ENCODE measurements at regions of chr20 and their contacts with region 1.

Region 1: GRCh38 chr20:62302341-62303058 is at the start of gene ADRM1:
- DNase-seq: peak; percentile 88 to 98 (median 95)
- ATAC-seq: peak; percentile 84
- H3K4me3 ChIP-seq: peak within 1 kb of the TSS; percentile 89
- H3K4me3 Mint-ChIP-seq: peak within 1 kb of the TSS; percentile 100
- H3K27ac ChIP-seq: peak within 1 kb of the TSS; percentile 89 to 92
- H3K27ac Mint-ChIP-seq: peak within 1 kb of the TSS; percentile 96
- H3K4me1 ChIP-seq: peaks cover 46% of the 10 kb centered on the region
- H3K4me1 Mint-ChIP-seq: peaks cover 26% of the 10 kb centered on the region
- H3K27me3 ChIP-seq: no peaks in the 10 kb centered on the region
- H3K27me3 Mint-ChIP-seq: no peaks in the 10 kb centered on the region
- CTCF ChIP-seq: peak; percentile 74
- total RNA-seq, gene ADRM1: 40.8 to 44.3 TPM

Region 2: DNA sequence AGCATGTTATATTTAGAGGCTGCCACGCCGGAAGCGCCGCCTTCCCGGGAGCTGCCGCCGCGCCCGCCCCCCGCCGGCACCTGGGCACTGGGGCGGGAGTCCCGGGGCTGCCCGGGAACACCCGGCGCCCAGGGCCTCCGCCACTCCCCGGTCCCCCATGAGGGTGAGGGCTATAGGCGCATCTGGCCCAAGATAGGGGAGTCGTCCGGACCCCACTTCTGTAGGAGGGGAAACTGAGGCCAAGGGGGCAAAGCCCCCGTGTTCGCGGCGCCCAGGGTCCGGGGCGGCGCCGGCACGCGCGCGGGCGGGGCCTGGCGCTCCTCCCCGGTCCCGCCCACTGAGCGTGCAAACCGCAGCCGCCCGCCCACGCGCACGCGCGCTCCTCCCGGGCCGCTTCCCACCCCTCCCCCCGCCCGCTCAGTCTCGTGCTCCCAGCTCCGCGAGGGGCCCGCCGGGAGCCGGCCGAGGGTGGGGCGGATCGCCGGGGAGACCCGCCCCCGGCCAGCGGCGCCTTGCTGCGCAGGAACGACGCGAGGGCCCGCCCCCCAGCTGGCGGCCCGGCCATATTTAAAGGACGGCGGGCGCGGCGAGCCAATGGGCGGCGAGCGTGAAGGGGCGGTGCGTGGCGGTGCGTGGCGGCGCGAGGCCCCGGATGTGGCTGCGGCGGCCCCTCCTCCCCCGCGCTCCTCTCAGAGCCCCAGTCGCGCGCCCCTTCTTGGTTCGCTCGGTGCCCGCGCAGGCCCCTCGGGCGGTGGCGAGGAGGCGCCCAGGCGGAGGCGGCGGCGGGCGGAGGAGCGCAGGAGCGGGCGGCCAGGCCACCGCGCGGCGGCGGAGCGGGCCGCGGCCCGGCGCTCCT is 180.5 kb before region 1 on chr20 and contains the start of gene LSM14B:
- CTCF ChIA-PET with region 1: no interaction called
- POLR2A ChIA-PET with region 1: interaction called, 3 read pairs
- intact Hi-C with region 1: loop called (anchors 2 kb)
- DNase-seq: peak; percentile 89 to 99 (median 96)
- ATAC-seq: peak; percentile 75
- H3K4me3 ChIP-seq: peak within 1 kb of the TSS; percentile 57
- H3K4me3 Mint-ChIP-seq: peak within 1 kb of the TSS; percentile 93
- H3K27ac ChIP-seq: peak within 1 kb of the TSS; percentile 62 to 89
- H3K27ac Mint-ChIP-seq: peak within 1 kb of the TSS; percentile 94
- H3K4me1 ChIP-seq: peaks cover 62% of the 10 kb centered on the region
- H3K4me1 Mint-ChIP-seq: peaks cover 61% of the 10 kb centered on the region
- H3K27me3 ChIP-seq: no peaks in the 10 kb centered on the region
- H3K27me3 Mint-ChIP-seq: no peaks in the 10 kb centered on the region
- CTCF ChIP-seq: no peak
- total RNA-seq, gene LSM14B: 34.5 to 35.7 TPM

Region 3: DNA sequence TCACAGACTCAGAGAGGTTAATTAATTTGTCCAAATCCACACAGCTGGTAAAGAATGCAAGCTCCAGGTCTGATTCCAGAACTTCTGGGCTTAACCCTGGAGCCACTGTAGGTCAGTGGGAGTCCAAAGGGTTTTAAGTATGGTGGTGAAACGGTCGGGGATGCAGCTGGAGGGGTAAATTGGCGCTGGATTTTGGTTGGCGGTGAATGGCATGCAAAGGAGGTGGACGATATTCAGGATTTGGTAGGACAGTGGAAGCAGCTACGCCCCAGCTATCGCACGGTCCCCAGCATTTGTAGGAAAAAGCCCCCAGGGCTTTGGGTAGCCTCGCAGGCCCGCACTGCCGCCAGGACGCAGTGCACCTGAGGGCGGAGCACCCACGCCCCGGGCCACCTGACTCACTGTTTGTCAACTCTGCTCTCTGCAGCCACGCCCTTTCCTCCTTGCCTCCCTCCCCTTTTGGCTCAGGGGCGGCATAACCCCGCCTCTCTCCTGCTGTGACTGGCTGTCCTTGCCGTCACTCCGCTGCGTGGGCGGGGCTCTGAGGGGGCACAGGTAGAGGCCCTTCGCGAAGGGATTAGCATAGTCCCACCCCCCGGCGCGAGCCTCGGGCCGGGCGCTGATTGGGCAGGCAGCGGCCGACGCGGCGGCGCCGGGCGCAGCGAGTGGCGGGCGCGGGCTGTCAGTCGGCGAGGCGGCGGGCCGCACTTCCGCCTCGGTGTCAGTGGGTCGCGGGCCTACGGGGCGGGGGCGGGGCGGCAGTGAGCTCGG is 64.5 kb before region 1 on chr20 and contains the start of gene OSBPL2:
- CTCF ChIA-PET with region 1: interaction called, 3 read pairs
- POLR2A ChIA-PET with region 1: interaction called, 8 read pairs
- intact Hi-C with region 1: loop called (anchors 2 kb)
- DNase-seq: peak; percentile 100
- ATAC-seq: peak; percentile 98
- H3K4me3 ChIP-seq: peak within 1 kb of the TSS; percentile 64
- H3K4me3 Mint-ChIP-seq: peak within 1 kb of the TSS; percentile 92
- H3K27ac ChIP-seq: peak within 1 kb of the TSS; percentile 32 to 57
- H3K27ac Mint-ChIP-seq: peak within 1 kb of the TSS; percentile 95
- H3K4me1 ChIP-seq: peaks cover 36% of the 10 kb centered on the region
- H3K4me1 Mint-ChIP-seq: peaks cover 43% of the 10 kb centered on the region
- H3K27me3 ChIP-seq: no peaks in the 10 kb centered on the region
- H3K27me3 Mint-ChIP-seq: peaks cover 9% of the 10 kb centered on the region
- CTCF ChIP-seq: no peak
- total RNA-seq, gene OSBPL2: 52.8 to 54.4 TPM

Region 4: DNA sequence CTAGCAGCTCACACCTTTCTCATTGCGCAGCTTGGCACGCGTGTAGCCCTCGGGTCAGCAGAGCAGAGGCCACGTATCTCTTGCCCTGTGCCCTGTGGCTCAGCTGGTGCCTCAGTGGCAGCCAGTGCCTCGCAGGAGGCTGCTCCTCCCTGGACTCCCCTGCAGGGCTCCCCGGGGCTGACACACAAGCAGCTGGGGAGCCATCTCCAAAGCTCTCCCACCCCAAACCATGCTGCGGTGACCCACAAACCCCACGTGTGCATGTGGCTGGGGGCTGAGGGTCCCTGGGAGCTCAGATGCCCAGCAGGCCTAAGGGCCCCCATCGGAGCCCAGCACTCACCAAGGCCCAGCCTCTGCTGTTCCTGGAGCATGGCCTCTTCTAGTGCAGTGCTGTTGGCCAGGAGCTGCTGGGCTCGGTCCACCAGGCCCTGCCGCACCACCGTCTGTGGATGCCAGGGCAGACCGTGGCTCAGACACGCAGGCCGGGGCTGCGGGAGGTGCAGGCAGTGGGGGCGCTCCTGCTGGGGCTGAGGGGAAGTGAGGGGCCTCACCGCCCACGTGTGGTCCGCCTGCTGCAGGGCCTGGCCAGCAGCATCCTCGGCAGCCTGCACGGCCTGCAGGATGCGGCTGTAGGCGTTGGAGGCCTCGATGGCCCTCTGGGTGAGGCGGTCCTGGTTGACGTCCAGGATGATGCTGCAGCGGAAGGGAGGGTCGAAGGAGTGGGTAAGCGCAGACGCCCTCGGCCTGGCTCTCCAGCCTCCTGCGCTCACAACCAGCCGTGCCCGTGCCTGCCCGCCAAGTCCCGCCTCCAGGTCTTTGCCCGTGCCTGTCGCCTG is 14.0 kb after region 1 on chr20:
- CTCF ChIA-PET with region 1: no interaction called
- POLR2A ChIA-PET with region 1: no interaction called
- intact Hi-C with region 1: no loop called
- DNase-seq: no peak
- ATAC-seq: no peak
- H3K4me3 ChIP-seq: no peak overlapping the region
- H3K4me3 Mint-ChIP-seq: no peak overlapping the region
- H3K27ac ChIP-seq: no peak overlapping the region
- H3K27ac Mint-ChIP-seq: no peak overlapping the region
- H3K4me1 ChIP-seq: no peaks in the 10 kb centered on the region
- H3K4me1 Mint-ChIP-seq: no peaks in the 10 kb centered on the region
- H3K27me3 ChIP-seq: no peaks in the 10 kb centered on the region
- H3K27me3 Mint-ChIP-seq: no peaks in the 10 kb centered on the region
- CTCF ChIP-seq: no peak

Region 5: GRCh38 chr20:62386383-62387218 is 84.1 kb after region 1 on chr20 and contains the start of gene RPS21:
- CTCF ChIA-PET with region 1: interaction called, 12 read pairs
- POLR2A ChIA-PET with region 1: interaction called, 4 read pairs
- intact Hi-C with region 1: loop called (anchors 1 kb)
- DNase-seq: peak; percentile 89 to 97 (median 92)
- ATAC-seq: peak; percentile 87
- H3K4me3 ChIP-seq: peak within 1 kb of the TSS; percentile 91
- H3K4me3 Mint-ChIP-seq: peak within 1 kb of the TSS; percentile 95
- H3K27ac ChIP-seq: peak within 1 kb of the TSS; percentile 84 to 94
- H3K27ac Mint-ChIP-seq: peak within 1 kb of the TSS; percentile 91
- H3K4me1 ChIP-seq: peaks cover 39% of the 10 kb centered on the region
- H3K4me1 Mint-ChIP-seq: peaks cover 58% of the 10 kb centered on the region
- H3K27me3 ChIP-seq: no peaks in the 10 kb centered on the region
- H3K27me3 Mint-ChIP-seq: no peaks in the 10 kb centered on the region
- CTCF ChIP-seq: no peak
- total RNA-seq, gene RPS21: 3,015 to 3,210 TPM

Region 6: DNA sequence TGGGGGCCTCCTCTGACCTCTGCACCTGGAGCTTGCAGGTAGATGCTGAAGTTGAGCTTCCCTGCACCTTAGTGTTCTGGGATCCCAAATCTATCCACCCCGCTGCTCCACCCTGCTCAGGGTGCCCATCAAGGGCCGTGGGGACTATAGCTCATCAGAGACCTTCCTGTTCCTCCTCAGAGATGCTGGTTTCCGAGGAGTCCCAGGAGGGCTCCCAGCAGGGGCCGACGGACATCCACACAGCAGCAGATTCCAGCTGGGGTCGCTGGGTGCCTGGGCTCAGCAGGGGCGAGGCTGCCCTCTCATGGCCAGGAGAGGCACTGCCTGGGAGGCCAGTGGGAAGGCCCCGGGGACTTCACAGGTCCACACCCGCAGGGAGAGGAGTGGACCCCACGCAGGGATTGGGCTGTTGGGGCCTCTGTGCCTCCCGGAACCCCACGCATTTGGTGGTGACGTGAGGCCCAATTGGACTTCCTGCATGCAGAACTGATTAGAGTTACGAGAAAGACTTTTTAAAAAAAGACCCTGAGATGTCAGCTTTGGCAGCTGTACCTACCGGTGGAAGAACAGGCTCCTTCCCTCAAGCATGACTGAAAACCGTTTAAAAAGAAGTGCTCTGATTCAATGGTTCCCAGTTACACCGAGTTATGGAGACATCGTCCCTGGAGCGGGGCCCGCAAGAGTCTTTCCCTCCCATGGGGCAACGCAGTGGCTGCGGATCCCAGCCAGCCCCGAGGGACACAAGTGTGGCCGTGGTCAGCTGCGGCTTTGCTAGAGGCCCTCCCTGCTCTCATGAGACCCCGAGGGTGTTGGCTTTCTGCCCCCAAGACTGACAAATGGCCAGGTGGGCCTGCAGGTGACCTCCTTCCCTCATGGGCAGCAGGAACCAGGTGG is 314.5 kb after region 1 on chr20:
- CTCF ChIA-PET with region 1: no interaction called
- POLR2A ChIA-PET with region 1: no interaction called
- intact Hi-C with region 1: loop called in 1 of 2 experiments (anchors 5 kb)
- DNase-seq: peak; percentile 44 to 82 (median 58)
- ATAC-seq: peak; percentile 88
- H3K4me3 ChIP-seq: no peak overlapping the region
- H3K4me3 Mint-ChIP-seq: peak overlapping the region; percentile 42
- H3K27ac ChIP-seq: no peak overlapping the region
- H3K27ac Mint-ChIP-seq: peak overlapping the region; percentile 44
- H3K4me1 ChIP-seq: peaks cover 27% of the 10 kb centered on the region
- H3K4me1 Mint-ChIP-seq: peaks cover 15% of the 10 kb centered on the region
- H3K27me3 ChIP-seq: no peaks in the 10 kb centered on the region
- H3K27me3 Mint-ChIP-seq: no peaks in the 10 kb centered on the region
- CTCF ChIP-seq: peak; percentile 82

Measured in CD4-positive, alpha-beta T cell (primary cell).